ENCODE measurements at regions of chr2 and their contacts with region 1.

Region 1: DNA sequence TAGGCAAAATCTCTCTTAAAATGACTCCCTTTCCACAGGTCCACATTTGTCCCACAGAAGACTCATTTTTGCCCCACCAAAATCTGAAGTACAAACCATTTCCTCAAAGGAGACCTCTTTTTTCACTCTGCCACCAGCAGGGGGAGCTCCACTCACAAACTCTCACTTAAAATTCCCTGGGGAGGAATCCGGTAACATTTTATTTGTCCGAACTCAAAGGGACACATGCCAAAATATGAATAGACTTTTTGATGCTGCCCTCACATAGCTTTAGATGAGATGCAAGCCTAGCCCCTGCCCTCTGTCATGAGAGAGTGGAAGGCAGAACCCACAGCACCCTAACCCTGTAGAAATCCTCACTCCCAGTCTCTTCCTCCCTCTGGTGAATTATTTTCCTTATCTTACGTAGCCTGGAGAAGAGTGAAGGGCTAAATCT is 57.1 kb downstream of the RMDN2 start:
- DNase-seq: peak; percentile 60
- ATAC-seq: peak; percentile 67
- H3K4me3 ChIP-seq: no peak overlapping the region
- H3K27ac ChIP-seq: no peak overlapping the region
- H3K4me1 ChIP-seq: no peaks in the 10 kb centered on the region
- H3K27me3 ChIP-seq: no peaks in the 10 kb centered on the region
- CTCF ChIP-seq: peak; percentile 83
- EP300 ChIP-seq: no peak
- POLR2A ChIP-seq: no peak
- RAD21 ChIP-seq: peak; percentile 50; the same call in 1 of the 2 replicates

Region 2: DNA sequence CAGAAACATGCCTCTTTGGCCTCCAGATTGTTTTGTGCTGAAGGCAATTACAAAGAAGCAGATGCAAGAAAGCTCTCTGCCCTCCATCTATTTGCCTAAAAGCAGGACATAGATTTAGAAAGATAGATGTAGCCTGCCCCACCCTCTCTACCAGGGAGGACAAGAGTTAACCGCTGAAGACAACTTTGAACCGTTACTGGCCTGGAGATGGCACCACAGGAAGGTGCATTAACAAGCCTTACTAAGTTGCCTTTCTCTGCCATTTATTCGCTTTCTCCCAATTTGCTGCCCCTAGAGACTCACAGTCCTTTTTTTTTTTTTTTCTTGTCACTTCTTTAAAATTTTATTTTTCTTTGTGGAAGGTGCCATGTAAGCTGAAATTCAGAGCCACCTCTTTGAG is 85.9 kb before region 1 on chr2:
- CTCF ChIA-PET with region 1: interaction called, 5 read pairs
- POLR2A ChIA-PET with region 1: no interaction called
- in situ Hi-C with region 1: no loop called
- intact Hi-C with region 1: loop called (anchors 2 kb)
- DNase-seq: peak; percentile 56
- ATAC-seq: peak; percentile 89
- H3K4me3 ChIP-seq: no peak overlapping the region
- H3K27ac ChIP-seq: no peak overlapping the region
- H3K4me1 ChIP-seq: peaks cover 9% of the 10 kb centered on the region; the same call in 1 of the 2 replicates
- H3K27me3 ChIP-seq: no peaks in the 10 kb centered on the region; a peak in 2 of 5 replicates
- CTCF ChIP-seq: peak; percentile 80
- EP300 ChIP-seq: no peak
- POLR2A ChIP-seq: no peak
- RAD21 ChIP-seq: peak; percentile 62; the same call in 1 of the 2 replicates

Region 3: DNA sequence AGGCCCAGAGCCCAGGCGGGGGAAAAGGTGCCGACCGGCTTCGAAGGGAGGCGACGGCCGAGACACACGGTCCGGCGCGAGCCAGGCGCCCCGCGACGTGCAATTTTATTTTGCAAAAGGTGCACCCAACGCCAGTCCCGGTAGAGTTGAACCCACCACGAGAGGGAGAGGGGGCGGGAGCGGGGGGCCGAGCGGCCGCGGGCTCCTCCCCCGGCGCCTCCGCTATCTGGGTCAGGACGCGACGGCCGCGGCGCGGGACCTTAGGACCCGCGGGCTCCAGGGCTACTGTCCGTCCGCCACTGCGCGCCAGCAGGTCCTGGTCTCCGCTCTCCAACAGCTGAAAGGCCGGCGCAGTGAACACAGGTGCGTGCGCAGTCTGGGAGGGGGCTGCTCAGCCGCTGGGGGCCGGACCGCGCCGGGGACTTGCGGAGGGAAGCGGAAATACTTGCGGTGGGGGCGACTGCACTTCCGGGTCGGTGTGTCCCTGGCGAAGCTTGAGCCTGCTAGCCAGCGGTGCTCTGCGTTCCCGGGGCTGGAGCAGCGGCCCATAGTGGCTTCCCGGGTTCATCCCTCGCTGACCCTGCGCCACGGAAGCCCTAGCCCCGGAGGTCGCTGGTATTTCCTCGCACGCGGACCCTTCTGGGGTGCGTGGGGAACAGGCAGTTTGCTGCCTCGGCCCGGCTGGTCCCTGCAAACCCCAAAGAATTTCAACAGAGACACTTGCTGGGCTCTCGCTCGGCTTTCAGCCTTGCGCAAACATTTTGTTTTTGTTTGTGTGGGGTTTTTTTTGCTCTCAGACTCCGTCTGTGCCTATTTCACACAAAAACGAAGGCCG is 56.9 kb before region 1 on chr2 and contains the start of gene RMDN2:
- CTCF ChIA-PET with region 1: no interaction called
- POLR2A ChIA-PET with region 1: no interaction called
- in situ Hi-C with region 1: no loop called
- intact Hi-C with region 1: loop called (anchors 5 kb)
- DNase-seq: peak; percentile 97
- ATAC-seq: peak; percentile 97
- H3K4me3 ChIP-seq: peak within 1 kb of the TSS; percentile 78 to 97 (median 90)
- H3K27ac ChIP-seq: peak within 1 kb of the TSS; percentile 98
- H3K4me1 ChIP-seq: peaks cover 75% of the 10 kb centered on the region
- H3K27me3 ChIP-seq: no peaks in the 10 kb centered on the region
- CTCF ChIP-seq: peak; percentile 63
- EP300 ChIP-seq: peak in 1 of 2 experiments; percentile 75; a peak in 2 of 4 replicates
- POLR2A ChIP-seq: peak; percentile 97 to 98
- RAD21 ChIP-seq: peak; percentile 84; the same call in 1 of the 2 replicates
- total RNA-seq, gene RMDN2: 4.7 and 8.9 TPM in 2 replicates

Region 4: GRCh38 chr2:38115216-38116032 is 133.3 kb after region 1 on chr2:
- CTCF ChIA-PET with region 1: interaction called, 15 read pairs
- POLR2A ChIA-PET with region 1: no interaction called
- in situ Hi-C with region 1: no loop called
- intact Hi-C with region 1: loop called (anchors 1 kb)
- DNase-seq: peak; percentile 75
- ATAC-seq: peak; percentile 97
- H3K4me3 ChIP-seq: no peak overlapping the region
- H3K27ac ChIP-seq: no peak overlapping the region
- H3K4me1 ChIP-seq: no peaks in the 10 kb centered on the region
- H3K27me3 ChIP-seq: peaks cover 0 to 9% of the 10 kb centered on the region in 2 experiments; a peak in 2 of 5 replicates
- CTCF ChIP-seq: peak; percentile 93
- EP300 ChIP-seq: no peak
- POLR2A ChIP-seq: no peak
- RAD21 ChIP-seq: peak; percentile 79

Region 5: GRCh38 chr2:38264396-38265281 is 282.5 kb after region 1 on chr2:
- CTCF ChIA-PET with region 1: no interaction called
- POLR2A ChIA-PET with region 1: no interaction called
- in situ Hi-C with region 1: loop called (anchors 5 kb)
- intact Hi-C with region 1: no loop called
- DNase-seq: no peak
- ATAC-seq: peak; percentile 48; the same call in 2 of the 3 replicates
- H3K4me3 ChIP-seq: no peak overlapping the region
- H3K27ac ChIP-seq: no peak overlapping the region
- H3K4me1 ChIP-seq: no peaks in the 10 kb centered on the region
- H3K27me3 ChIP-seq: peaks cover 0 to 22% of the 10 kb centered on the region in 2 experiments; a peak in 3 of 5 replicates
- CTCF ChIP-seq: peak; percentile 25; the same call in 1 of the 2 replicates
- EP300 ChIP-seq: no peak
- POLR2A ChIP-seq: no peak
- RAD21 ChIP-seq: no peak